ENCODE measurements at regions of chr7 and their contacts with region 1.

Region 1: DNA sequence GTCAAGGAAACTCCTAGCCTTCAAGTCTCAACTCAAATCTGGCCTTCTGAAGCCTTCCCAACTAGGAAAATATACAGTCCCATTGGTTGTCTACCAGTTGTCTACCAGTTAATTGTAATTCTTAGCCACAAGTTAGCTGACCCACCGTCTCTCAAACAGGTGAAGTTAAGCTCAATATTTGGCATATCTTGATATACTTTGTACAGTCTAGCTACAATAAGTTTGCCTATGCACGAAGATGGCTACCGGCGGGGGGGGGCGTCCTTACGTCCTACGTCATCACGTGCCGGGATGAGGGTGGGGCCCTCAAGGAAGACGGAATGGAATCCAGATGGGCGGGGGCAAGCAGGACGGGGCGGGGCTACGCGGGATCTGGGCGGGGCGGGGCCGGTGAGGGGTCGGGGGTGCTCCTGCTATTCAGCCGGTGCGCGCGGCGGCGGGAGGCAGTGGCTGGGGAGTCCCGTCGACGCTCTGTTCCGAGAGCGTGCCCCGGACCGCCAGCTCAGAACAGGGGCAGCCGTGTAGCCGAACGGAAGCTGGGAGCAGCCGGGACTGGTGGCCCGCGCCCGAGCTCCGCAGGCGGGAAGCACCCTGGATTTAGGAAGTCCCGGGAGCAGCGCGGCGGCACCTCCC is at the start of gene AHR:
- DNase-seq: peak; percentile 95
- H3K4me3 Mint-ChIP-seq: peak within 1 kb of the TSS; percentile 90
- H3K27ac Mint-ChIP-seq: peak within 1 kb of the TSS; percentile 93
- H3K4me1 Mint-ChIP-seq: peaks cover 18% of the 10 kb centered on the region
- H3K27me3 Mint-ChIP-seq: no peaks in the 10 kb centered on the region
- total RNA-seq, gene AHR: 40.9 to 43.3 TPM

Region 2: DNA sequence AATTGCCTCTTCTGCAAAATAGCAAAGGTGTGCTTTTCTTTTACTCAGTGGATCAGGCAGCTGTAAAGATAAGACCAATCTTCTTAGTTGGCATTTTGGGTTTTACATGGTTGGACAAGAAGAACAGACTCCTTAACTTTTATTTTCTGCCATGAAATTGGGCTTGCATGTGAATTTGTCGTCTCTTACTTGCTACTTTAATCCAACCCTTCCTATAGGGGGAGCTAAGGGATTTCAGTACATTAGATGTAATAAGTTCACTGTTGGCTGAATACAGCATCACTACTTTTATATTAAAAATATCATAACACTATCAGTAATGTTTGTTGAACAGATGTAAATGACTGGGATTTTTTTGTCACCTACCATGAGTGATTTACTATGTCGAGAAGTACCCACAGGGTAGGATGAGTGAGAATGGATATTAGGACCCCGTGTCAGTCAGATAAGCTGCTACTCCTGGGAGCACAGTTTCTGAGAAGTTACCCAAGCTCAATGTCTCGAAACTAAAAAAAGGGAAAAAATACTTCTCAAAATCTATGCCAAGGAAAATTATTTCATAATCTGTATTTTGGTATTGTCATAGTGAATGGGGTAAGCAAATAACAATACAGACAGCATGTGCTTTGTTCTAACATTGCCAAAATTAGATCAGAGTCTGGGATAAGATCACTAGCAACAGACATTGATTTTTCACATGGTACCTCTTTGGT is 289.2 kb before region 1 on chr7:
- CTCF ChIA-PET with region 1: interaction called, 28 read pairs
- POLR2A ChIA-PET with region 1: interaction called, 4 read pairs
- intact Hi-C with region 1: loop called (anchors 2 kb)
- DNase-seq: no peak
- H3K4me3 Mint-ChIP-seq: no peak overlapping the region
- H3K27ac Mint-ChIP-seq: no peak overlapping the region
- H3K4me1 Mint-ChIP-seq: peaks cover 19% of the 10 kb centered on the region
- H3K27me3 Mint-ChIP-seq: no peaks in the 10 kb centered on the region

Region 3: DNA sequence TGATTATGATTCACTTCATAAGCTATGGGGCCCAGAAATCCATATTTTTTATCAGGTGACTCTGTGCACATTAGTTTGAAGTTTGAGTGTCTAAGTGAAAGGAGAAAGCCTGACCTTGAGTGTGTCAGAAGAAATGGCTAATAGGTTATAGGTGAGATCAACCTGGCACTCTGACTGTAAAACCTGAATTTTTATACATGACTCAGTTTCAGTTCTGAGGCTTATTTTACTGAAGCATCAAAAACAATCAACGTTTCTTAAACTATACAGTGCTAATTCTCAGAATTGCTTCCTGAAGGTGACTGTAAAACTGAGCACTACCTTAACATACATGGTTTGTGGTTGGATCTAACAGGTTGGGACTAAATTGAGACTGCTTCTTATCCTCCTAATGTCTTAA is 159.2 kb before region 1 on chr7:
- CTCF ChIA-PET with region 1: interaction called, 16 read pairs
- POLR2A ChIA-PET with region 1: interaction called, 6 read pairs
- intact Hi-C with region 1: loop called (anchors 1 kb)
- DNase-seq: no peak
- H3K4me3 Mint-ChIP-seq: no peak overlapping the region
- H3K27ac Mint-ChIP-seq: peak overlapping the region; percentile 82
- H3K4me1 Mint-ChIP-seq: peaks cover 70% of the 10 kb centered on the region
- H3K27me3 Mint-ChIP-seq: no peaks in the 10 kb centered on the region

Region 4: DNA sequence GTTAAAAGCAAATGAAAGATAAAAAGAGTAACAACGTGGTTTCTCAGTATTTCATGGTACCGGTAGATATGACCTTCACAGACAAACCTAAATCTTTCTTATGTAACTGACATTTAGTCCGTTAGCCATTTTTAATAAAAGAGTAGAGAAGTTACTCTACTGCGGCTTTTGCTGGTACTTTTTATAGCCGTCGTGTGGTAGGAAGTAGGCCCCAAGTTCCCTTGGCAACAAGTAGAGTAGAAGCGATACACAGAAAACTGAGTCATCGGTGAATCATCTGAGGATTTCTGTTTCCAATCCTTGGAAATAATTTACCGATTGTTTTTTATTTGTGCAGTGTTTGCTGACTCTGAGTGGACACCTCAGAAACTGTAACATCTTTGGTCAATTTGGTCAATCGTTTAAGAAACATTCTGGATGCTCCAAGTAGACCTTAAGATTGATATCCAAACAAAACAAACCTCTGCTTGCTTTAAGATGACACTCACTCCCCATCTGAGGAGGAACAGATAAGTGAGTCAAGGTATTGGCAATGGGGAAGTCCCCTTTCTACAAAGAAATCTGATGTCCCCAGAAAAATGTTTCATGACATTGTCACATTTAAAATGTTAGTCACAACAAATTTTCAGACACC is 63.8 kb before region 1 on chr7:
- CTCF ChIA-PET with region 1: no interaction called
- POLR2A ChIA-PET with region 1: interaction called, 4 read pairs
- intact Hi-C with region 1: loop called (anchors 1 kb)
- DNase-seq: peak; percentile 83
- H3K4me3 Mint-ChIP-seq: peak overlapping the region; percentile 71
- H3K27ac Mint-ChIP-seq: peak overlapping the region; percentile 89
- H3K4me1 Mint-ChIP-seq: peaks cover 48% of the 10 kb centered on the region
- H3K27me3 Mint-ChIP-seq: no peaks in the 10 kb centered on the region

Region 5: DNA sequence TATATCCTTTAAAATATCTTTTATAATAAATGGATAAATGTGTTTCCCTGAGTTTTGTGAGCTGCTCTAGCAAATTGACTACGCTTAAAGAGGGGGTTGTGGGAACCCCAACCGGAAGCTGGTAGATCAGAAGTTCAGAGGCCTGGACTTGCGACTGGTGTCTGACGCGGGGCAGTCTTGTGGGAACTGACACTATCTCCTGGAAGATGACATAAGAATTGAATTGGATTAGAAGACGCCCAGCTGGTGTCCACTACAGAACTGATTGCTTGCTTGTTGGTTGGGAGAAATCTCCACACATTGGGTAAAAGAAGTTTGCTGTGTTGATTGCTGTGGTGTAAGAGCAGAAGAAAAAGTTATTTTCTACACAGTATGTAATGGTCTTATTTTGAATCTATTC is 51.0 kb before region 1 on chr7:
- CTCF ChIA-PET with region 1: no interaction called
- POLR2A ChIA-PET with region 1: no interaction called
- intact Hi-C with region 1: no loop called
- DNase-seq: no peak
- H3K4me3 Mint-ChIP-seq: no peak overlapping the region
- H3K27ac Mint-ChIP-seq: no peak overlapping the region
- H3K4me1 Mint-ChIP-seq: peaks cover 7% of the 10 kb centered on the region
- H3K27me3 Mint-ChIP-seq: no peaks in the 10 kb centered on the region

Region 6: GRCh38 chr7:17318146-17318545 is 19.8 kb after region 1 on chr7:
- CTCF ChIA-PET with region 1: no interaction called
- POLR2A ChIA-PET with region 1: no interaction called
- intact Hi-C with region 1: no loop called
- DNase-seq: no peak
- H3K4me3 Mint-ChIP-seq: no peak overlapping the region
- H3K27ac Mint-ChIP-seq: no peak overlapping the region
- H3K4me1 Mint-ChIP-seq: peaks cover 45% of the 10 kb centered on the region
- H3K27me3 Mint-ChIP-seq: no peaks in the 10 kb centered on the region

Region 7: GRCh38 chr7:17402628-17403278 is 104.4 kb after region 1 on chr7:
- CTCF ChIA-PET with region 1: interaction called, 12 read pairs
- POLR2A ChIA-PET with region 1: interaction called, 8 read pairs
- intact Hi-C with region 1: no loop called
- DNase-seq: peak; percentile 49
- H3K4me3 Mint-ChIP-seq: peak overlapping the region; percentile 53
- H3K27ac Mint-ChIP-seq: peak overlapping the region; percentile 92
- H3K4me1 Mint-ChIP-seq: peaks cover 44% of the 10 kb centered on the region
- H3K27me3 Mint-ChIP-seq: peaks cover 8% of the 10 kb centered on the region

Measured in activated CD4-positive, alpha-beta memory T cell treated with anti-CD3 and anti-CD28 coated beads for 36 hours (primary cell).